Sigmoid colon (tissue), 7 donors: ENCODE measurements at regions of chr19 and their contacts with region 1.

Region 1: GRCh38 chr19:36564391-36564790 is 8.7 kb downstream of the ZNF529 start:
- DNase-seq: no peak
- H3K4me3 ChIP-seq: no peak overlapping the region
- H3K27ac ChIP-seq: no peak overlapping the region
- H3K4me1 ChIP-seq: no peaks in the 10 kb centered on the region
- H3K27me3 ChIP-seq: no peaks in the 10 kb centered on the region
- CTCF ChIP-seq: no peak
- EP300 ChIP-seq: no peak
- POLR2A ChIP-seq: no peak

Region 2: DNA sequence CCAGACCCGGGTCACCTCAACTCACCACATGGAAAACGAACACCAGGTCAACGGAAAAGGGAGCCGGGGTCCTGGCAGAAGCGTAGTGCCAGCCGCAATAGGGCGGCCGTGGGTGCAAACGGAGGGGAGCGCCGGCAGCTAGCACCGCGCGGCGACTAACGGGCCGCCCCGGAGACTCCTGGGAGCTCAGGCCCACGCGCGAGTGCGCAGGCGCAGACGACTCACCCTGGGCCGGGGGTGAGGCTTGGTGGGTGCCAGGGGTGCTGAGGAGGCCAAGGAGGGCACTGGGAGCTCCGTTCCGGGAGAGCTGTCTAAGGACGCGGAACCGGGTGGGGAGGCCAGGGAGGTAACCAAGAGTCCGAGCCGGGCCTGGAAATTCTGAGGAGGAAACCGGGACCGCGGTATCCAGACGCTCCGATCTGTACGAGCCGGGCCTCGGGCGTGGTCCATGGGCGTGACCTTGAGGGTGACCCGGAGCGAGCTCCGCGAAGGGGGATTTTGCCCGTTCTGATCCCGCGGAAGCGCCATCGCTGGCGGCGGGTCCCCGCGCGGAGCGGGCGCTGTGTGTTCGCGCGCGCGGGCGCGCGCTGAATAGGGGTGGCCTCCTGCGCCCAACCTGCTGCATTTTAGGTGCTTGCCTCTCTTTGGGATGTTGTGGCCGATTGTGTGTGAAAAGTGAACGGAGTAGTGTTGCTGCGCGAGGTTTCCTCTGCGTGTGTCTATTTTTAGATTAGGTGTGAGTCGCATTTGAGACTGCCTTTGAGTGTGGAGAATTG is 40.9 kb after region 1 on chr19 and contains the start of gene ZNF382:
- intact Hi-C with region 1: loop called (anchors 10 kb)
- DNase-seq: peak; percentile 82
- H3K4me3 ChIP-seq: peak within 1 kb of the TSS; percentile 66 to 78 (median 75)
- H3K27ac ChIP-seq: peak within 1 kb of the TSS; percentile 84 to 85 (median 84)
- H3K4me1 ChIP-seq: peaks cover 0 to 18% (median 12%) of the 10 kb centered on the region in 4 donors
- H3K27me3 ChIP-seq: no peaks in the 10 kb centered on the region
- CTCF ChIP-seq: no peak
- EP300 ChIP-seq: no peak
- POLR2A ChIP-seq: peak; percentile 30 to 38
- total RNA-seq, gene ZNF382: 13.2 to 22.8 (median 19.5) TPM